Tibial artery (tissue), 4 donors: ENCODE measurements at regions of chr2 and their contacts with region 1.

Region 1: DNA sequence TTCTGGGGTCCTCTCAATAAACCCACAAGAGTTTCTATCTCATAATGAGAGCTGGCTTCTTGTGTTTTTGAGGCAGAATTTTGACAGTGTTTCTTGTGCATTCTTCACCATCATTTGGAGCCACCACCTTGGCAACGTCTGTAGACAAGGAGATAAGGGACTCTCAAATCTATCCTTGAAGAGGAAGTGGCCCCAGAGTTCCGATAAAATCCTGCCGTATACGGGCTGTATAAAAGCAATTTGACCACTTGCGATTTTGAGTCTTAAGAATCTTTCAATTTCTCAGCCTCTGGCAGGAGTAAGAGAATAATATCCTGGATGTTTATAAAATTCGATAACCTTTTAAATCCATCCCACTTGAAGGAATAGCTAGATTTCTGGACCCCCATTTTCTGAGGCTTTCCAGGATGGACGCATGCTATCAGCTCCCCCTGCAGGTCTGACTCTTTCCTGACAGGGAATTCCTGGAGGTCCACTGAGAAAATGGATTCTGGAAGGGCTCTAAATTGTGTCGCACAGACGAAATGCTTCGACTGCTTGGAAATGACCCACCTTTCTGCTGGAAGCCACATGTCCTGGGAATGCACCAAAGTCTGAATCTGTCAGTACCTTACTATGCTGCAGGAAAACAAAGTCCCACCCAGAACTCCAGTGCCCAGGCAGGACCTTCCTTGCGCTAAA is 54.1 kb downstream of the E2F6 start:
- DNase-seq: peak in 1 of 2 donors; percentile 41
- H3K4me3 ChIP-seq: peak overlapping the region; percentile 34 to 47
- H3K27ac ChIP-seq: no peak overlapping the region
- H3K4me1 ChIP-seq: peaks cover 0 to 47% (median 13%) of the 10 kb centered on the region in 4 donors
- H3K27me3 ChIP-seq: no peaks in the 10 kb centered on the region
- CTCF ChIP-seq: peak; percentile 82 to 87

Region 2: GRCh38 chr2:11234309-11234708 is 177.6 kb before region 1 on chr2:
- intact Hi-C with region 1: loop called (anchors 5 kb)
- DNase-seq: no peak
- H3K4me3 ChIP-seq: no peak overlapping the region
- H3K27ac ChIP-seq: no peak overlapping the region
- H3K4me1 ChIP-seq: peaks cover 0 to 37% (median 0%) of the 10 kb centered on the region in 4 donors
- H3K27me3 ChIP-seq: no peaks in the 10 kb centered on the region
- CTCF ChIP-seq: peak; percentile 52 to 56